Activated CD4-positive, alpha-beta T cell treated with anti-CD3 and anti-CD28 coated beads, Interleukin-2, amount 10 ng/mL, durations not matched to agents 24 days and 14 days (primary cell): ENCODE measurements at regions of chr10 and their contacts with region 1.

Region 1: DNA sequence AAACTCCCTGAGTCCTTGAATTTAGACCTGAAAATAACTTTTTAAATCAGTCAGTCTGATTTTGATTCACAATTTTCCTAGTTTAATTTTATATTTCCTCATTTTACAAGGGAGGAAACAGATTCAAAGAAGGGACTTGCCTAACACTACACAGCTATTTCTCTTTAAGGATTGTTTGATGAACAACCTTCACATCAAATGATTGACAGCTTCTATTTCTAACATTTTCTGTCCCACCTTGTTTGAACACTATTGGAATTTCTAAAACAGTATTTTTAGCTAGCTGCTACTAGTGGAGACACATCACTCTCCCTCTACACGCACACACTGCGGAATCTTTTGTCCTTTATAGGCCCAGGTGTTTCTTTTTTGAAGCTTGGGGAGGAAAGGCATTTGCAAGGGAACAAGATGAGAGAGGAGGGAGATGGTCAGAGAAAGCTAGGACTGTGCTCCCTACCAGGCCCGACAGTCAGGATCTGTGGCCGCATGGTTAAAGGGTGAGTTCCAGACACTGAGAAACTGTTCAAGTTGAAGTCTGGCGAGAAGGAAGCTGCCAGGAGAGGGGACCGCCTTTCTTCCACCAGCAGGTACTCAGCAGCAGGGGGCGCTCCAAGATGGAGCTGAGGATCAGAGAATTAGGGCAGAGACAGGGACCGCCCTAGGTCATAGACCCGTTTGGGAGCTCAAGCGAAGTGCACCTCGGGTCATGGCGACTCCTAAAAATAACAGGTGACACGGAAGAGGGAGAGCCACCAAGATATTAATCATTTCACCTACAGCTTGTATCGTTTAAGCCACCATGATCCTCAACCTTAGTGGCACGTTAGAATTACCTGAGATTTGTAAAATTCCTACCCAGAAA is 49.7 kb downstream of the DNAJC12 start:
- DNase-seq: peak; percentile 94
- H3K4me3 Mint-ChIP-seq: peak overlapping the region; percentile 41
- H3K27ac Mint-ChIP-seq: peak overlapping the region; percentile 77
- H3K4me1 Mint-ChIP-seq: peaks cover 42% of the 10 kb centered on the region
- H3K27me3 Mint-ChIP-seq: no peaks in the 10 kb centered on the region

Region 2: DNA sequence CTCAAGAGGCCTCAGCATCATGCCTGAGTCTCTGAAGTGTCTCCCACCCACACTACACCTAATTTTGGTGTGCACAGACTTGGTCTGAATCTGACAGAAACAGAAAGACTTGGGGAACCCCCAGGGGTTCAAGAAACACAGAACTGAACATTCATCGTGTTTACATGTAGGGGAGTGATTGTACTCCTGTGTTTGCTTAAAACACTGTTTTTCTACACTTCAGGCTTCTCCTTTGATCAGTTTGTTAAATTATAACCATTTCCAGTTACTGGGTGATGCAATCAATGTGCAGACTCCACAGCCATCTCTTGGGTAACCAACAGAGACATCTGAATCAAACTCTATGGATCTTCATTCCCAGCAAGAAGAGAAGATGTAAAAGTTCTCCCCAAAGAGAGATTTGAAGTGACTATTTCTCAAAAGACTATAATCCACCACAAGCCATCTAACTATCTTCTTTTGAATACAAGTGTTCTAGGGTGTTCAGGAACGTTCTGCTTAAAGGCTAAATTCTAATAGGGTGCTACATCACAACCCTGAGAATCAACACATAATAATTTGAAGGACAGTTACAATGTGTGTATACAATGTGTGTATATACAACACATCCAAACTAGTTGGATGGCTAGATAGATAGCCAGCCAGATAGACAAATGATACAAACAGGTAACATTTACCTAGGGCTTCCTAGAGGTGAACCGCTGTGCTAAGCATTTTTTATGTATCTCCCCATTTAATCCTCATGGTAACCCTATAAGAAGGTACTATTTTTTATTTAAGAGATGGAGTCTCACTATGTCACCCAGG is 15.5 kb after region 1 on chr10:
- intact Hi-C with region 1: loop called (anchors 1 kb)
- DNase-seq: no peak
- H3K4me3 Mint-ChIP-seq: peak overlapping the region; percentile 30
- H3K27ac Mint-ChIP-seq: peak overlapping the region; percentile 84
- H3K4me1 Mint-ChIP-seq: peaks cover 22% of the 10 kb centered on the region
- H3K27me3 Mint-ChIP-seq: no peaks in the 10 kb centered on the region

Region 3: DNA sequence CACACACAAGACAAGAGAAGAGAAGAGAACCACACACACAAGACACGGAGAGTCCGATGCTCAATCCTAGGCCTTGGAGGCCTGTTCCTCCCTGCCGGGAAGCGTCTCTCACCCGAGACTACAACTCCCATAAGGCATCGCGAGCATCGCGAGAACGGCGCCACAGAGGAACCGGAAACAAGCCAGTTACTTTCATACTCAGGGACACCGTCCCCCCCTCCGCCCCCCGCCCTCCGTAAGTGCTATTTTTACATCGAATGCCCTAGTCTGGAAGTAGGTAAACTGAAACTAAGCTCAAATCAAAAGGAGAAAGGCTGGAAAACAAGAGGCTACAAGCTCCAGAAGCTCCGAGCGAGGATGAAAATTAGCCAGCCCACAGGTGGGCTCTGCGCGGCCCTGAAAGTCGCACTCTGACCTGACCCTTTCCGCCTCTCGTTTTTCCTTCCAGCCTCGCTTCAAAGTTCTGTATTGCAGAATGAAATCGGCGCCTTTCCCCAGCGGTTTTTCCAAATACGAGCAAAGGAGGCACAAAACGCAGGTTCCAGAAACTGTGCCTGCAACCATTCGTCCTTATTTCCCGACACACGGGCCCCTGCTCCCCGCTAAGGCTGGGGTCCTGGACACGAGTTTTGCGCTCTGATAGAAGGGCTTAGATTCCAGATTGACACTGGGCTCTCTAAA is 61.2 kb after region 1 on chr10:
- intact Hi-C with region 1: loop called (anchors 1 kb)
- DNase-seq: peak; percentile 99
- H3K4me3 Mint-ChIP-seq: peak overlapping the region; percentile 90
- H3K27ac Mint-ChIP-seq: peak overlapping the region; percentile 92
- H3K4me1 Mint-ChIP-seq: peaks cover 8% of the 10 kb centered on the region
- H3K27me3 Mint-ChIP-seq: no peaks in the 10 kb centered on the region

Region 4: DNA sequence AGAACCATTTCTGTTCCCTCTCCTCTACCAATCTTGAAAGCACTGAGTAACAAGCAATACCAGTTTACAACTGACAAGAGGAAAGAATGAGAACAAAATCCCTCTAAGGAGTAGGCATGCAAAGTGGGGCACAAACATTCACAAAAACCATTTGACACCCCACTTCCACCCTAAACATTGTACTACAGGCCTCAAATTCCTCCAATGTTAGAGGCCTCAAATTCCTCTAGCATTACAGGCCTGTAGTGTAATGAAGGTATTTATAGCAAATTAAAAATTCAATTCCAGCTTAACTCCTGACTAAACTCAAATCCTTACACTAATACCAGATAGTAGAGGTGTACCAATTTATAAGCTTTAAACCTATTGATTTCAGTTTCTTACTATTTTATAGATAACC is 181.6 kb after region 1 on chr10:
- intact Hi-C with region 1: no loop called
- DNase-seq: no peak
- H3K4me3 Mint-ChIP-seq: no peak overlapping the region
- H3K27ac Mint-ChIP-seq: no peak overlapping the region
- H3K4me1 Mint-ChIP-seq: peaks cover 2% of the 10 kb centered on the region
- H3K27me3 Mint-ChIP-seq: no peaks in the 10 kb centered on the region

Region 5: DNA sequence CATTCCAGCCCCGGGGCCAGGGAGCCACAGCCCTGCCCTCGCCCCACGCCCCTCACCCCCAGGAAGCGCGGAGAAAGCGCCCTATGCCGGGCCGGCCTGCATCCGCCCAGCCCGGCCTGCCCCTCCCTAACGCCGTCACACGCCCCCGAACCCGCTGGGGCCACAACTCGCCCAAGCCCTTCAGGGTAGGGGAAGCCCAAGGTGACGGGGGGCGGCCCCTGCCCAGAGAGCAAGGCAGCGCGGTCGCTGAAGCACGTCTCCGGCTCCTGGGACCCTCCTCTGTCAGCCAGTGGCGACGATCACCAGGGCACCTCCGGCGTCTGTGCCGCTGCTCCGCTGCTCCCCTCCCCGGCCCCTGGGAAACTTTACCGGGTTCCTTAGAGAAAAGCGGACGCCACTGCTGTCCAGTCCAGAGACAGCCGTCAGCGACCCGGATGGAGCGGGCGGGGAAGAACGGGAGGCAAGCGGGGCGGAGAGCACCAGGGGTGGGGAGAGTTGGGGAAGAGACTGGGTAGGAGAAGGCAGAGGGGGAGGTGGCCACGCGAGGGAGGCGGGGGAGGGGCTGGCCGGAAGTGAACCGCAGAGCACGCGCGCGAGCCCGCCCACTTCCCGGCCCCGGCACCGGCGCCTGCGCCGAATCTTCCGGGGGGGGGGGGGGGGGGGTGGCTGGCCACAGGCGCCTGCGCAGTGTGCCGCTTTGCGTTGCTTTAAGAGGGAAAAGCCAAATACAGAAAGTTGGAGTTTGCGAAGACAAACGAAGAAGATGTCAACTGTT is 286.7 kb after region 1 on chr10 and contains the start of gene HERC4:
- intact Hi-C with region 1: loop called (anchors 1 kb)
- DNase-seq: peak; percentile 96
- H3K4me3 Mint-ChIP-seq: peak within 1 kb of the TSS; percentile 94
- H3K27ac Mint-ChIP-seq: peak within 1 kb of the TSS; percentile 91
- H3K4me1 Mint-ChIP-seq: peaks cover 31% of the 10 kb centered on the region
- H3K27me3 Mint-ChIP-seq: no peaks in the 10 kb centered on the region
- total RNA-seq, gene HERC4: 45.2 and 49.1 TPM in 2 replicates

Region 6: GRCh38 chr10:68301790-68302502 is 513.7 kb after region 1 on chr10:
- intact Hi-C with region 1: loop called (anchors 5 kb)
- DNase-seq: no peak
- H3K4me3 Mint-ChIP-seq: no peak overlapping the region
- H3K27ac Mint-ChIP-seq: no peak overlapping the region
- H3K4me1 Mint-ChIP-seq: no peaks in the 10 kb centered on the region
- H3K27me3 Mint-ChIP-seq: no peaks in the 10 kb centered on the region